Cardiac septum (tissue), 1 donor: ENCODE measurements at regions of chr18 and their contacts with region 1.

Region 1: GRCh38 chr18:12657684-12658425 is at the start of gene SPIRE1:
- DNase-seq: peak; percentile 89
- total RNA-seq, gene SPIRE1: 87.1 TPM

Region 2: DNA sequence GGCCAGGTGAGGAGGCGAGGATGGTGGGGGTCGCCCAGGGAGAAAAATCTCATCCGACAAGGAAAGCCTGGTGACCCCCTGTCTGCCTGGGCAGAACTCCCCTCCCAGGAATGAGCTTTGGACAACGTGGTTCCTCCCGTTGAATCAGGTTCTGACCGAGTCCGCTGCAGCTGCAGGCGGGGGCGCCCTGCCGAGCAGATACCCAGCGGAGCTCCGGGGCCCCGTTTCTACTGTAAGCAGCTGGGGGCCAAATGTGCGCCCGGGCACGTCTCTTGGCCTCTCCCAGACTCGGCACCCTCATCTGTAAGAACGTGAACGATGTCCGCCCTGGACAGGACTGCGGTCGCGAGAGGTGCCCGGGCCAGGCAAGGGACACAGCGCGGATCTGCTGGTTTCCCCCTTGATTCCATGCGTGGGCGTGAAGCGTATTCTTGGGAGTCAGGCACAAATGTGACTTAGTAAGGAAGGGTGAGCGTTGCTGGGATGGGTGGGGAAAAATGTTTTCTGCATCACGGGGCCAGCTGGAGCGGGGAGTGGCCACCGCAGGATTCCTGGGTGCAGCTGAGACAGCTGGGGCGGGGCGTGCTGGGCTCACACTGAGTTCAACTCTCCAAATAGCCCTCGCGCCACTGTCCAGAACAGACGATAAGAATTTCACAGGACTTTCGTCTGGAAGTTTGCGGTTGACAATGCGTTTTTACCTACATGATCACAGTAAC is 370.0 kb before region 1 on chr18:
- intact Hi-C with region 1: loop called (anchors 5 kb)
- DNase-seq: peak; percentile 86

Region 3: DNA sequence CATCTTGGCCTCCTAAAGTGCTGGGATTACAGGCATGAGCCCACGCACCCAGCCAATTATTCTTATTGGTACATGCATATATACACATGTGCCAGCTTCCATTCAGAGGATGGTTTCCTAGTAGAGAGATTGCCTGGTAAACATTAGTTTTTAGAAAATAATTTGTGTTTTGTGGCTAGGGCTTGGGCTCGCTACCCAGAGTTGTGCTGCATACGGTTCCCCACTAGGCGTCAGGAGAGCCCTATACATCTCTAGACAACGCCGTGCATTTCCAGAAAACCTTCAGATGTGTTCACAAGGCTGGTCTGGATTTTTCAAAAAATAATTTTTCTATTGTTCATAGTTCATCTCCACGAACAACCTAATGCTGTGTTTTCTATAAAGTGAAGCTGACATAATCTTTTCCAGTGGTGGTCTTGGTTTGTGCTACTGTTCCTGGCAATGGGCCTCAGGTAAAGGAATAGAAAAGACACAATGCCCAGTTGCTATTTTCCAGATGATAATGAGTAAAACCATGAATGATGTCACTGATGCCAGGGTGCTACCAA is 266.2 kb before region 1 on chr18:
- intact Hi-C with region 1: loop called (anchors 1 kb)
- DNase-seq: peak; percentile 35

Region 4: DNA sequence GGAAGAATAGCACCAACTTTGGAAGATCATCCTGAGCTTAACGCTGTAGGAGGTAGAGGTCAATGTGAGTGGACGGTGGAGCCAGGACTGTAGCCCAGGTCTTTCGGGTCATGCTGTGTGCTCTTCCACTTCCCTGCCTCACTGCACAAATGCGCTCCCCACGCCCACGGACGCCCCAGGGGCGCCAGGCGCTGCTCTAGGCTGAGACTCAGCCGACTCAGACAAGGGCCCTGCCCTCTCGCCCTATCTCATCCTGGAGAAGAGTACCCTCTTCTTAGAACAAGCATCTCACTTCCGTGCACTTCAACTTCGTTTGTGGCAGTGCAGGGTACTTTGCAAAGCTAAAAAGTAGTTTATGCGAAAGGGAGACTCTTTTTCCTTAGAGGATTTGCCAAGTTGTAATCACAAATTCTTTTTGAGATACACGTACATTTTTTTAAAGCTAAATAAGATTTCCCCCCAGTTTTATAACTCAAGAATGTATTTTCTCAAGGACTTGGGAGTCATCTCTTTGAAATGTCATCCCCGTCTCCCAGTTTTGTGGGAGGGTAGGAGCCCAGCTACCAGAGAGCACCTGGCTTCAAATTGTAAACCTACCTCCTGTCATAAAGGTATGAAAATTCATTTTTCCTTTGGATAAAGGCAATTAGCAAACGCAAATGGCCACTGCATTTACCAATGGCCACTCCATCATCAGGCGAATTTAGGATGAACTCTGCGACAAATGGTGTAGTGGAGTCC is 251.3 kb before region 1 on chr18:
- intact Hi-C with region 1: loop called (anchors 1 kb)
- DNase-seq: peak; percentile 35

Region 5: DNA sequence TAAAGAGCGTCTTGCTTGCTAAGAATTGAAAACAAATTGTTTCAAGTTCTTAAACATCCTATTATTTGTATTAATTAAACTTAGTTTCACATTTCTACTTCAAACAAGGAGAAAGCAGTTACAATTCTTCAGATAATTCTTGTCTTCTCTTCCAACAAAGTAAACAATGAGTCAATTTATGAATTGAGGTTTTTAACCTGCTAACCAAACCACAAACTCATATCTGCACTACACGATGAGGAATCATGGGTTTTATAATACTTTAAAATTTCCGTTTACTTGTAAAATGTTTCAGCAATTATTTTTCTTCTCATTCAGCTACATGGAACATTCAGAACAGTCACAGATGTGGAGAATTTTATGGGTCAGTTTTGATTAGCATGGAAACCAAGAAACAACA is 114.2 kb before region 1 on chr18:
- intact Hi-C with region 1: loop called (anchors 5 kb)
- DNase-seq: no peak

Region 6: DNA sequence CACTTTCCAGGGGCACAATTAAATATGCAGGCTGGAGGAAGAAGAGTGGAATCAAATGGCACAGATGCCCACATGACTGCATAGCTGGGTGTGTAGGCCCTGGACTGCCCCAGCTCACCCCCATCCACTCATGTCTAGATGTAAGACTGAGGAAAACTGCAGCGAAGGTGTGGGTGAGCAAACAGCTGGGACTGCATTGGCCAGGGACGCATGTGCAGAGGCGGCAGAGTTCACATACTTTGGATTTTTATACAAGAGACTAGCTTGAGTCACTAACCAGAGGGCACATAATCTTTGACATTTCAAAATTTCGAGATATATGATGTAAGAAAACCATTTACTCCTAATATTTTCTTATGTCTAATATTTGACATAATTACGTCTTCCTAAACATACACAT is 60.1 kb before region 1 on chr18:
- intact Hi-C with region 1: loop called (anchors 5 kb)
- DNase-seq: no peak